ENCODE measurements at regions of chr17 and their contacts with region 1.

Region 1: GRCh38 chr17:67376737-67377487 is at the start of gene PITPNC1:
- DNase-seq: peak; percentile 91
- ATAC-seq: peak; percentile 88 to 89
- H3K4me3 ChIP-seq: peak within 1 kb of the TSS; percentile 95
- H3K27ac ChIP-seq: peak within 1 kb of the TSS; percentile 91
- H3K4me1 ChIP-seq: peaks cover 24% of the 10 kb centered on the region
- H3K27me3 ChIP-seq: no peaks in the 10 kb centered on the region
- CTCF ChIP-seq: peak; percentile 10
- total RNA-seq, gene PITPNC1: 23.7 TPM

Region 2: DNA sequence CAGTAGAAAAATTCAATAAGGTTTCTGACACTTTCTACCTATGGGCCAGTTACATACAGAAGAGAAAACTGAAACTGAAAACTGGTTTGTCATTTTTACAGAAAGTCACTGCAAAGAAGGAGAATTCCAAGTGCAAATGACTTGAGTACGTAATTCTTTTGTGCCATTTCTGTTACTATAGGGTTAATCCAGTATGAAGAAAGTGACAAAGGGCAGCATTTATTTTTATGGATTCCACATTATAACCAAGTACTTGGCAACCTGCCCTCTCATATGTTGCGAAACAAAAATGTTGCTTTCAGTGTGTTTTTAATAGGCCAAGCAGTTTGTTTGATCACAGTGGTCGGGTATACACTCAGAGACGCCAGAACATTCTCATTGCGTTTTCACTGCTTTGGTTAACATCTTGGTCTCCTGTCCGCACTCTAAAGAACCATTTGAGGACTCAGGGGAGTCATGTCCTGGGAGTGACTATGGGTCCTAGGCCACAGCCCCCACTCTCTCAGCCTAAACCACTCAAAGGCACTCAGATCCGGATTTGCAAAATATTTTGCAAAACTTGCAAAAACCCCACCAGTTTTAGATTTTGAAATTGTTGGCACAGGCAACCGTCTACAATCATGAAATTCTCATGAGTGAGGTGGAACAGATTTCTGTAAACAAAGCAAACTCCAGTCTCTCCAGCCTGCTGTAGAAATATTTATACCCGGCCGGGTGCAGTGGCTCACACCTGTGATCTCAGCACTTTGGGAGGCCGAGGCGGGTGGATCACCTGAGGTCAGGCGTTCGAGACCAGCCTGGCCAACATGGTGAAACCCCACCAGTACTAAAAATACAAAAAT is 116.5 kb before region 1 on chr17:
- intact Hi-C with region 1: no loop called
- DNase-seq: no peak
- ATAC-seq: peak; percentile 91
- H3K4me3 ChIP-seq: no peak overlapping the region
- H3K27ac ChIP-seq: peak overlapping the region; percentile 79
- H3K4me1 ChIP-seq: peaks cover 39% of the 10 kb centered on the region
- H3K27me3 ChIP-seq: no peaks in the 10 kb centered on the region
- CTCF ChIP-seq: no peak

Region 3: GRCh38 chr17:67528751-67529436 is 152.0 kb after region 1 on chr17:
- intact Hi-C with region 1: no loop called
- DNase-seq: peak; percentile 77
- ATAC-seq: peak; percentile 91 to 96
- H3K4me3 ChIP-seq: peak overlapping the region; percentile 40
- H3K27ac ChIP-seq: peak overlapping the region; percentile 33
- H3K4me1 ChIP-seq: peaks cover 24% of the 10 kb centered on the region
- H3K27me3 ChIP-seq: no peaks in the 10 kb centered on the region
- CTCF ChIP-seq: no peak

Region 4: DNA sequence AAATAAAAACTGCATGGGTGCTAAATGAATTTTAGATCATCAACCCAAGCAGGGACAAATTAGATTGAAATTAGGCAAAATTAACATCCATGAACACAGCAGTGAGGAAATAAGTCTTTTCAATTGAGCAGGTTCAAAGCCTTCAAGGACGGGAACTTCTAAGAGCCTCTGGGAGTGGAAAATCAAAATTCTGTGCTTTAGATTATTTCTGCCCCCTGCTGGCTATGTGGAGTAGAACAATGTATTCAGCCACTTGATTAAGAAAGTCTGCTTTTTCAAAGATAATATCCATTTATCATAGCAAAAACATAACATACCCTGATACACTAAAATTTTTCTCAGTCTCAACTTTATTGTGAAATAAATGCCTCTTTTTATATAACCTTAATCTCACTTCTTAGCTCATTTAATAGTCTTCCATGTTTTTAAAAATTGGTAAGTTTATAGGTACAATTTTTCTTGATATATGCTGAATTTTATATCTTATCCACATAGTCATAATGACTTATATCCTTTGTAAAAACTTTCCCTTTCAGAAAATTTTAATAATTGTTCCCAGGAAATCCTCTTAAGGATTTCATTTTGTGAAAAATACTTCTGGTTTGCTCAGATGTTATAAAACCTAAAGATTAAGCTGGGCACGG is 312.7 kb after region 1 on chr17:
- intact Hi-C with region 1: loop called (anchors 5 kb)
- DNase-seq: no peak
- ATAC-seq: peak; percentile 74 to 77
- H3K4me3 ChIP-seq: no peak overlapping the region
- H3K27ac ChIP-seq: no peak overlapping the region
- H3K4me1 ChIP-seq: peaks cover 6% of the 10 kb centered on the region
- H3K27me3 ChIP-seq: no peaks in the 10 kb centered on the region
- CTCF ChIP-seq: peak; percentile 80